Calu3 (cell line): ENCODE measurements at regions of chr3 and their contacts with region 1.

Region 1: GRCh38 chr3:51371943-51372557 is 13.0 kb upstream of the MANF start:
- DNase-seq: peak; percentile 71
- H3K4me3 Mint-ChIP-seq: no peak overlapping the region
- H3K27ac Mint-ChIP-seq: no peak overlapping the region
- H3K4me1 Mint-ChIP-seq: no peaks in the 10 kb centered on the region
- H3K27me3 Mint-ChIP-seq: peaks cover 83% of the 10 kb centered on the region
- CTCF ChIP-seq: no peak

Region 2: DNA sequence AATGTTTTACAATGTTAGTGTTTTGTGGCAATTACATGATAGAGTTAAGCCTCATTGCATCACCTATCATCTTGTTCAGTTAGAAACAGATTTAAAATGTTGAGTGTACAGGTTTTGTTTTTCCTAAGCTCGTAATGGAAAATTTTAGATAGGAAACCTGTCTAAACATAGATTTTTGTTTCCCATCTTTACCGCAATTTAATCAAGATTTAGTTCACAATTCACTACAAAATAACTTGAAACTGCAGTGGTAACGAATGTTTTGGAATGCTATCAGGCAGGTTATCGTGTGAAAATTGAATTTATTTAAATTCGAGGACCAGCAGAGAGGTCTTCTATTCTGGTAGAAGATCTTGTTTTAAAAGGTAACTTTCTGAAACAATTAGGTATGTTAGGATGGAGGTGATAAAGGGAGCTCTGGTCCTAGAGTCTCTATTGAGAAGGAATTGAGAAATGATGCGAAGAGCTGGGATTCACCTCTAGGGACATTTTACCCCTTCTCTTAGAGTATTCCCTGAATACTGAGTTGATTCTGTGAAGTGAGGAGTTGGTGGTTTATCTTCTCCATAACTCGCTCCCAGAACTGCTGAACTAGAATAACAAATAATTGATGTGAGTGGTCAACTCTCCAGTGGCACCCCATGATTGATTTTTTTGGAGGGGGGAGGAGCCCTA is 695.9 kb before region 1 on chr3:
- CTCF ChIA-PET with region 1: no interaction called
- intact Hi-C with region 1: no loop called
- DNase-seq: no peak
- H3K4me3 Mint-ChIP-seq: no peak overlapping the region
- H3K27ac Mint-ChIP-seq: no peak overlapping the region
- H3K4me1 Mint-ChIP-seq: peaks cover 7% of the 10 kb centered on the region
- H3K27me3 Mint-ChIP-seq: peaks cover 74% of the 10 kb centered on the region
- CTCF ChIP-seq: no peak

Region 3: DNA sequence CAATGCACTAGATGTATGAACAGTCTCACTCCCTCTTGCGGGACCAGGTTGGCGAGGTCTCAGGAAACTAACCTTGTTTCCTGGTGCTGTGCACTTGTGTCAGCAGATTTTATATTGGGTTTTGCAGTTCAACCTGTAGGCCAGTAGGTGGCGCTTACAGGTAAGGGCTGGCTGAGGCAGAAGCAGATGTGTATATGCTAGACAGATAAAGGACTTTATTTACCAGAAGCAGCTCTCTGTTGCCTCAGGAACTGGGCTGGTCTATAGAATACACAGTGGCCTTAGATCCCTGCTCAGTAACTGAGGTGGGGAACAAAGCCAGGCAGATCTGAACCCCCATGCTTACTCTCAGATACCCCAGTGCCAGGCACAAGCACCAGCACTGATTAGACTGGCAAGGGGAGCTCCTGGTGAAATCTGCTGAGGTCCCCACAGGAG is 400.5 kb before region 1 on chr3:
- CTCF ChIA-PET with region 1: interaction called, 4 read pairs
- intact Hi-C with region 1: loop called (anchors 2 kb)
- DNase-seq: peak; percentile 63
- H3K4me3 Mint-ChIP-seq: no peak overlapping the region
- H3K27ac Mint-ChIP-seq: no peak overlapping the region
- H3K4me1 Mint-ChIP-seq: no peaks in the 10 kb centered on the region
- H3K27me3 Mint-ChIP-seq: no peaks in the 10 kb centered on the region
- CTCF ChIP-seq: peak; percentile 47

Region 4: DNA sequence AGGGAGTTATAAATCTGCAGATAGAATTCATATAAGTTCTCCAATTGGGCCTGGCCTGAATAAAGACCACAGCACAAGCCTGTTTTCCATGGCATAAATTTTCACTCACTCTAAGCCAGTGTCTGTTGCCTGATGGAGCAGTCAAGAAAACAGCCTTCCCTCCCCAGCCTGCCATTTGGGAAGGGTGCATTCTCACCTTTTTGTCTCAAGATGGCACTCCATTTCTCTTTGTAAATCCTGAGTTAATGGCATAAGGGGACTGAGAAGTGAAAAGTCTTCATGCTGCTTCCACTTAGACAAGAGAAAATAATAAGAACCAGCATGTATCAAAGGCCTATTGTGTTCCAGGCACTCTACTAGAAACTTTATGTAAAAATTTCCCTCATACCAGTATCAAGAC is 102.6 kb before region 1 on chr3:
- CTCF ChIA-PET with region 1: no interaction called
- intact Hi-C with region 1: loop called (anchors 1 kb)
- DNase-seq: no peak
- H3K4me3 Mint-ChIP-seq: no peak overlapping the region
- H3K27ac Mint-ChIP-seq: no peak overlapping the region
- H3K4me1 Mint-ChIP-seq: no peaks in the 10 kb centered on the region
- H3K27me3 Mint-ChIP-seq: peaks cover 32% of the 10 kb centered on the region
- CTCF ChIP-seq: no peak